IMR-90 (cell line): ENCODE measurements at regions of chr17 and their contacts with region 1.

Region 1: GRCh38 chr17:27446569-27447301 is 9.5 kb upstream of the KSR1 start:
- DNase-seq: peak; percentile 100
- ATAC-seq: peak; percentile 88
- H3K4me3 ChIP-seq: no peak overlapping the region
- H3K27ac ChIP-seq: peak overlapping the region; percentile 85; the same call in 1 of the 2 replicates
- H3K4me1 ChIP-seq: peaks cover 25% of the 10 kb centered on the region
- H3K27me3 ChIP-seq: no peaks in the 10 kb centered on the region
- CTCF ChIP-seq: no peak
- POLR2A ChIP-seq: no peak
- RAD21 ChIP-seq: no peak

Region 2: GRCh38 chr17:27367121-27367991 is 79.4 kb before region 1 on chr17:
- CTCF ChIA-PET with region 1: no interaction called
- POLR2A ChIA-PET with region 1: no interaction called
- dilution Hi-C with region 1: no loop called
- in situ Hi-C with region 1: loop called (anchors 10 kb)
- intact Hi-C with region 1: no loop called
- DNase-seq: no peak
- ATAC-seq: no peak
- H3K4me3 ChIP-seq: no peak overlapping the region
- H3K27ac ChIP-seq: no peak overlapping the region
- H3K4me1 ChIP-seq: peaks cover 14% of the 10 kb centered on the region
- H3K27me3 ChIP-seq: no peaks in the 10 kb centered on the region
- CTCF ChIP-seq: no peak
- POLR2A ChIP-seq: no peak
- RAD21 ChIP-seq: no peak

Region 3: DNA sequence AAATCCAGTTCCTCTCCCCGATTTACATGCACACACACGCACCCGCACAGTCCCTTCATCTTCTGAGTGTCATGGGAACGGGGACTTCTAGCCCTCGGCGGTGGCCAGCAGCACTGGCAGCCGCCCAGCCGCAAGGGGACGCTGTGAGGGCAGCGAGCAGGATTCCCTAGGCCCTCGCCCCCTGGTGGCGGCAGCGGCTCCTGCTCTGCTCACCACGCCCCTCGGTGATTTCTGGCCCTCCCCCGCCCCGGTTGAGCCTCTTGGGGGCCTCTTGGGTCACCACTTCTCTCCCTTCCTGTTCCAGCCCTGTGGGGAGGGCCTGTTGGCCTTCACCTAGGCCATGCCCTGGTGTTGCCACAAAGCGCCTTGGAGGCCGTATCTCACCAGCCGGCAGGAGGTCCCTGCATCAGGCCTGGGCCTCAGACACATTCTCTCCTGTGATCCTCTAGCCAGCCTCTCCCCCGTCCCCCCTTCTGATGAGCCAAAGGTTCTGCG is 65.7 kb before region 1 on chr17:
- CTCF ChIA-PET with region 1: no interaction called
- POLR2A ChIA-PET with region 1: no interaction called
- dilution Hi-C with region 1: no loop called
- in situ Hi-C with region 1: no loop called
- intact Hi-C with region 1: loop called (anchors 2 kb)
- DNase-seq: peak; percentile 20
- ATAC-seq: peak; percentile 28; the same call in 1 of the 2 replicates
- H3K4me3 ChIP-seq: no peak overlapping the region
- H3K27ac ChIP-seq: no peak overlapping the region
- H3K4me1 ChIP-seq: peaks cover 18% of the 10 kb centered on the region
- H3K27me3 ChIP-seq: no peaks in the 10 kb centered on the region
- CTCF ChIP-seq: peak; percentile 87
- POLR2A ChIP-seq: no peak
- RAD21 ChIP-seq: peak; percentile 50